ENCODE measurements at regions of chr14 and their contacts with region 1.

Region 1: DNA sequence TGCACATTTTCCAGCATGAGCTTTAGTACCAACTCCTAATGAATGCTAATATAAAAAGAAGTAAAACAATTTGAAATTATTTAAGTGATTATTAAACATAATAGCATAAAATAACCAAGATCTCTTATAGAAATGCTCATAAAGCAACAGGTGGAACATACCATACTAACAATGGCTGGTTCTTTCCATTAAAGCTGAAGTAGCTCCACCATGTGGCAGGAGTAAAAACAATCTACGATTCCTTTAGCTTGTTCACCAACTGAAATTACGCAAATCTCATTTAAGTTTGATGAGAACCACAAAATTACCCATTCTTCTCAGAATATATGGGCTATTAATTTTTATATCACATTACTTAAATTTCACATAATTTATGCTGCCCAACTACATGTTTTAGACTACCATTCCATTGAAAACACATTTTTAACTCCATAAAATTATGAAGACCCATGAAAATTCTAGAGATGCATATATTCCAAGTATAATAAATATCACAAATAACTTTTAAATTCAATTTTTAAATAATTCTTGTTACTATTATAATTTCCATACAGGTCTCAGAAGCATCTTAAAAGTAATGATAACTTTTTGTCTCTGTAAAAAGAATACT is 213.6 kb downstream of the DAD1 start:
- DNase-seq: peak; percentile 48
- H3K27ac ChIP-seq: no peak overlapping the region
- CTCF ChIP-seq: peak; percentile 59

Region 2: DNA sequence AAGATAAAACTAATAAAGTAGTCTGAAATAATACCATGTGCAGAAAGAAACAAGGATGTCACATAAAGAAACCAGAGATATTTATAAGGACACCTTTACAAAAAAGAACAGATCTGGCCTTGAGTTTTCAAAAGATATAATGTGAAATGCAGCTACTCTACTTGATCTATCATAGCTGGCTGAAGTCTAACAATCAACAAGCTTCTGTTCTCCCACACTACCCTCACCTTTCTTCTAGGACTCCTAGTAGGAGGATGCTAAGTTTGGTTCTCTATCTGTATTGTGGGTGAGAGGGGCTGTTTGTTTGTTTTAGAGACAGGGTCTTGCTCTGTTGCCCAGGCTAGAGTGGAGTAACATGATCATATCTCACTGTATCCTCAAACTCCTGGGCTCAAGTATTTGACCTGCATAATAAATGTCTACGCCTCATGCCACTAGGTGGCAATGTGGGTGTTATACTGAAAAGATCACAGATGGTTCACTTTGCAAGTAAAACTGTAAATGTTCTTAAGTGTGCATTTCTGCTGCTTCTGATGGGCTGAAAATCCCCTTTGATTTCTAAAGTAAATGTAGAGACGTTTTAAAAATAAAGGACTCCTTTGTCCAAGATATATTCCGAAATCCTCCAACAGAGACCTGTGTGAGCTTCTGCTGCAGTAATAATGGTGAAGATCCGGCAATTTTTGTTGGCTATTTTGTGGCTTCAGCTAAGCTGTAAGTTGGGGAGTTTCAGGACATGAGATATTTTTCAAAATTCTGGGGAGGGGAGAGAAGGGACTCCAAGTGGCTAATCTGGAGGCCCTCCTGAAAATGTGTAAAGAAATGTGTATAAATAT is 55.7 kb before region 1 on chr14:
- CTCF ChIA-PET with region 1: interaction called, 42 read pairs
- POLR2A ChIA-PET with region 1: interaction called, 3 read pairs
- DNase-seq: peak; percentile 20
- H3K27ac ChIP-seq: no peak overlapping the region
- CTCF ChIP-seq: peak; percentile 78